Ascending aorta (tissue), 2 donors: ENCODE measurements at regions of chr19 and their contacts with region 1.

Region 1: DNA sequence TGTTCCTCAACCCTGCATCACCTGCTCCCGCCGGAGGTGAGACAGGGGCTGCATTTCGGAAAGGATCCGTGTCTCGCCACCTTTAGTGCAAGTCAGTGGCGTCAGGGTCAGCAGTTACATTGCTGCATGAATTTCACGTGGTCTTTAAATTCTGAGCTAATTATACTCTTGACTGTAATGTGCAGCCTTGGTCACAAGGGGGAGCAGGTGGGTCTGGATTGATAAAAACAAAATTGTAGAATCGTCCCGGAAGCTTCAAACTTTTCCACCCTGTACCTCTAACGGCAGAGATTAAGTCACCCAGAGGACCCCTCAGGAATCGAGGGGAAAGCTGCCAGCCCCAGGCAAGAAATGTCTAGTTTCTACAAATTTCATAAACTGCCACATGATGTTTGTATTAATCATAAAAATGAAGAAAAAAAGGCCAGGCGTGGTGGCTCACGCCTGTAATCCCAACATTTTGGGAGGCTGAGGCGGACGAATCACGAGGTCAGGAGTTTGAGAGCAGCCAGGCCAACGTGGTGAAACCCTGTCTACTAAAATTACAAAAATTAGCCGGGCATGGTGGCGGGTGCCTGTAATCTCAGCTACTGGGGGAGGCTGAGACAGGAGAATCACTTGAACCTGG is 20.2 kb downstream of the BBC3 start:
- DNase-seq: peak in 1 of 2 donors; percentile 93
- H3K4me3 ChIP-seq: no peak overlapping the region
- H3K27ac ChIP-seq: peak overlapping the region; percentile 48 to 69
- H3K4me1 ChIP-seq: no peaks in the 10 kb centered on the region
- H3K27me3 ChIP-seq: no peaks in the 10 kb centered on the region
- CTCF ChIP-seq: peak; percentile 81 to 93 (median 83)

Region 2: GRCh38 chr19:47152224-47153017 is 58.4 kb before region 1 on chr19:
- intact Hi-C with region 1: loop called (anchors 1 kb)
- DNase-seq: no peak
- H3K4me3 ChIP-seq: no peak overlapping the region
- H3K27ac ChIP-seq: no peak overlapping the region
- H3K4me1 ChIP-seq: peaks cover under 1 to 6% of the 10 kb centered on the region in 2 donors
- H3K27me3 ChIP-seq: no peaks in the 10 kb centered on the region
- CTCF ChIP-seq: no peak